Heart left ventricle (tissue), 16 donors: ENCODE measurements at regions of chr1 and their contacts with region 1.

Region 1: GRCh38 chr1:147545133-147545532 is 3.8 kb downstream of the BCL9 start:
- DNase-seq: peak in 3 of 5 donors; percentile 9 to 30 (median 26)
- ATAC-seq: no peak
- H3K4me3 ChIP-seq: no peak overlapping the region
- H3K27ac ChIP-seq: peak overlapping the region in 2 of 12 donors; percentile 18 to 21
- H3K4me1 ChIP-seq: peaks cover 0 to 53% (median 18%) of the 10 kb centered on the region in 12 donors
- H3K27me3 ChIP-seq: peaks cover 0 to 3% (median 0%) of the 10 kb centered on the region in 9 donors
- CTCF ChIP-seq: no peak
- POLR2A ChIP-seq: no peak

Region 2: GRCh38 chr1:147172168-147172992 is 372.8 kb before region 1 on chr1 and contains the start of gene PRKAB2:
- intact Hi-C with region 1: loop called in 1 of 10 experiments (anchors 10 kb)
- DNase-seq: peak; percentile 96 to 98 (median 97)
- ATAC-seq: peak; percentile 91 to 98 (median 96)
- H3K4me3 ChIP-seq: peak within 1 kb of the TSS; percentile 69 to 96 (median 88)
- H3K27ac ChIP-seq: peak within 1 kb of the TSS; percentile 81 to 99 (median 94)
- H3K4me1 ChIP-seq: peaks cover 0 to 56% (median 35%) of the 10 kb centered on the region in 12 donors
- H3K27me3 ChIP-seq: no peaks in the 10 kb centered on the region
- CTCF ChIP-seq: peak; percentile 90 to 99 (median 96)
- POLR2A ChIP-seq: peak; percentile 6 to 50
- total RNA-seq, gene PRKAB2: 15.0 to 43.2 (median 28.9) TPM

Region 3: DNA sequence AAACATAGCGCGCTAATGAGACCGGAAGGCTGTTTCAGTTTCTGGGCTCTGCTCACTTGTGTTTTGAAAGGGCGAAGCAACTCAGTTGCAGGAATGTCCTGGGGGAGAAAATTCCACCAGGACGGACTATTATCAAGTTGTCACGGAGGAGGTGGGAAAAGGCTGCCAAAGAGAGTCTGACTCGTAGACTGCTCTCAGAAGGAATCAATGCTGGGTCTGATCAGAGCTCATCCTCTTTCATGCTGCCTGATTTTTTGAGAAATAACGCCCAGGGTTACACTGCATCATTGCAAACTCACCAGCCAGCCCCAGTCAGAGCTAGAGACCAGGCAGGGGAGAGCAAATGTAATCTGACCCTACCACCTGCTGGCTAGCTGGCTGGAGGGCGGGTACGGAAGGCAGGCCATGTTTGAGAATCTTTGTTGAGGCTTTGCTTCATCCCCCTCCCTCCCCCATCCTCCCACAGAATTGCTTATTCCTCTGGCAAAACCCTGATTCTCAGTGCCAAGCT is 40.3 kb before region 1 on chr1:
- intact Hi-C with region 1: loop called in 1 of 10 experiments (anchors 5 kb)
- DNase-seq: peak in 2 of 5 donors; percentile 31 to 45
- ATAC-seq: peak in 3 of 4 donors; percentile 67 to 72 (median 70)
- H3K4me3 ChIP-seq: peak overlapping the region in 4 of 12 donors; percentile 10 to 18 (median 14)
- H3K27ac ChIP-seq: peak overlapping the region in 9 of 12 donors; percentile 10 to 78 (median 52)
- H3K4me1 ChIP-seq: peaks cover 0 to 20% (median 5%) of the 10 kb centered on the region in 12 donors
- H3K27me3 ChIP-seq: no peaks in the 10 kb centered on the region
- CTCF ChIP-seq: no peak
- POLR2A ChIP-seq: no peak

Region 4: GRCh38 chr1:147579934-147580537 is 34.9 kb after region 1 on chr1:
- intact Hi-C with region 1: loop called in 1 of 10 experiments (anchors 2 kb)
- DNase-seq: no peak
- ATAC-seq: no peak
- H3K4me3 ChIP-seq: no peak overlapping the region
- H3K27ac ChIP-seq: no peak overlapping the region
- H3K4me1 ChIP-seq: peaks cover 0 to 27% (median 12%) of the 10 kb centered on the region in 12 donors
- H3K27me3 ChIP-seq: peaks cover 0 to 29% (median 0%) of the 10 kb centered on the region in 9 donors
- CTCF ChIP-seq: no peak
- POLR2A ChIP-seq: no peak

Region 5: DNA sequence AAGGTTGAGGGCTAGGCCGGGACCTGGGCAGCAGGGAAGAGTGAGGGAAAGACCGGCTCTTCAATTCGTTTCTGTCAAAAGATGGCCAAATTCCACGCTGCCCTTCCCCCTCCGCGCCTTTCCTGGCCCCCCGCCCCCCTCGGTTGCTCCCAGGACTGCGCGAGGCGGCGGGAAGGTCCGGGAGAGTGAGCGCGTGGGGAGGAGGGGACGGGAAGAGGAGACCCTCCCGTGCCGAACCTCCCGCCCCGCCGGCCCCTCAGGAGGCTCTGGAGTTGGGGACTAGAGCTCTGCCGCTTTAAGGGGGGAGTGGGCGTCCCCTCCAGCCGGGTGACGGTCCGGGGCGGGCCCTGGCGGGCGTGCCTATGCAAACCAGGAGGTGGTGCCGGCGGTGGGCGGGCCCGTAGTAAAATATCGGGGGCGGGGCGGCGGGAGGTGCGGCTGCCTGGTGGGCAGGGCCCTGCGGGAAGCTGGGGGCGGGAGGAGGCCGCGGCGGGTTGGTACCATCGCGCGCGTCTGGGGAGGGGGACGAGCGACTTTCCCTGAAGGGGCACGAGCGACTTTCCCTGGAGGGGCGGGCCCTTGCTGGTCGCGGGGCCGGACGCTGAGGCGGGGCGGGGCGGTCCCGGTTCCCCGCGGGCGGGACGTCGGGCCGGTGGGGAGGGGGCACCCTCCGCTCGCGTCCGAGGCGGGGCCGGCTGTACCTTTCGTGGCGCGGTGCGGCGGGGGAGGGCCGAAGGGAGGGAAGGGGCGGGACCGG is 54.4 kb after region 1 on chr1:
- intact Hi-C with region 1: loop called (anchors 1 to 5 kb)
- DNase-seq: peak; percentile 98 to 99 (median 98)
- ATAC-seq: peak; percentile 89 to 96 (median 95)
- H3K4me3 ChIP-seq: peak overlapping the region; percentile 62 to 99 (median 78)
- H3K27ac ChIP-seq: peak overlapping the region; percentile 62 to 97 (median 90)
- H3K4me1 ChIP-seq: peaks cover 0 to 34% (median 16%) of the 10 kb centered on the region in 12 donors
- H3K27me3 ChIP-seq: no peaks in the 10 kb centered on the region
- CTCF ChIP-seq: no peak
- POLR2A ChIP-seq: peak; percentile 91 to 98